ENCODE measurements at regions of chr19 and their contacts with region 1.

Region 1: DNA sequence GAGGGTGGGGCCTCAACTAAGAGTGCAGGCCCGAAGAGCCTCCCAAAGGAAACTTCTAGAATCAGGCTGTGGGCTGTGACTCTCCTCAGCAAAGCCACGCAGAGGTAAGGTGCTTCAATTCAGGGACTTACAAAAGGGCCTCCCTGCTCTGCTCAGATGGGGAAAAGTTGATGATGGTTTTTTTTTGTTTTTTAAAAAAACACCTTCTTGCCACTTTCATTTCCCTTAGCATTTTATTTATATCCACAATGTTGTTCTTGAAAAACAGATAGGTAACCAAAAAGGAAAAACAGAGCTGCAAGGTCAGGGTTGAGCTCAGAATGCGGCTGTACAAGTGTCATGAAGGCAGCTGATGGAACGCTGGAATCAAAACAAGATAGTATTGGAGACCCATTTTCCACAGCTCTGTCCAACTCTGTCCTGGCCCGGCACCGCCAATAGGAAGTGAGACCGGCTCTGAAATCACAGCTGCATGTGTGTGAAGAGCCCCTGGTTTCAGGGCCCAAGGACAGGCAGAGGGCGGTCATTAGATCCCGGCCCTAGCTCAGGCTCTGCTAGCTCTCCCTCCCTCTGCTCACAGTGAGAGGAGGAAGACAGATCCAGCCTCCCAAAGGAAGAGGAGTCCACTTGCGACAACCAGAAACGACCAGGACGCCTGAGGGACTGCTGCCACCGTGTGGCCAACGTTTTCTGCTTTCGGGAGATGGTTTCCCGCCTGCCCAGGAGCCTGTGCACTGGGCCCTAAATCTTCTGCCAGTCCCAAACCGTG is 58.3 kb downstream of the KLF2 start:
- DNase-seq: peak; percentile 72 to 80 (median 77)
- H3K4me3 ChIP-seq: peak overlapping the region in 1 of 2 donors; percentile 50
- H3K4me3 Mint-ChIP-seq: peak overlapping the region; percentile 63 to 85 (median 77)
- H3K27ac ChIP-seq: peak overlapping the region; percentile 66
- H3K27ac Mint-ChIP-seq: peak overlapping the region; percentile 93 to 97 (median 96)
- H3K4me1 ChIP-seq: peaks cover 69% of the 10 kb centered on the region
- H3K4me1 Mint-ChIP-seq: peaks cover 35 to 76% (median 60%) of the 10 kb centered on the region in 4 donors
- H3K27me3 ChIP-seq: no peaks in the 10 kb centered on the region
- H3K27me3 Mint-ChIP-seq: no peaks in the 10 kb centered on the region

Region 2: DNA sequence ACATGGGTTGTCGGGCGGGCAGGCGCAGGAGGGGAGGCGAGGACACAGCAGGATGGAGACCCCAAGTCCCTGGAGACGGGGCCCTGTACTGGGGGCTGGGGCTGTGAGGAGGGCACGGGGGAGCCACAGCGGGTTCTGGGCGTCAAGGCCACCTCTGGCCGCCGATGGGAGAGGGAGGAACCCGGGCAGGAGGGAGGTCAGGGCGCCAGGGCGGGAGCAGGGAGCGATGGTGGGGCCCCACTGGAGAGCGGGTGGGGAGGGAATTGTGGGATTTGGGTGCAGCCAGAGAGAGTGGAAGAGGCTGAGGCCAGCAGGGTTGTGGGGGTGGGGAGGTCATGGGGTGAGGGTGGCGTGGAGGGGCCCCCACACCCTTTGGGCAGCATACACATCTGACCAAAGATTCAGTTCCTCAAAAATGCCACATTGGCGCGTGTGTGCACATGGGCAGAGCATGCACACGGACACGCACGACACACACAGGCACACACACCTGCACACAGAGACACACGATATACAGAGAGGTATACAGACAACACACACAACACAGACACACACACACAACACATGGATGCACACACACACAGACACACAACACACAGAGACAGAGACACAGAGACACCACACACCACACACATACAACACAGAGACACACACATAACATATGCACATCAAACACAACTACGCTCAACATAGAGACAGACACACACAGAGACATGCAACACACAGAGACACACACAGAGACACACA is 130.3 kb before region 1 on chr19:
- CTCF ChIA-PET with region 1: interaction called, 257 read pairs
- POLR2A ChIA-PET with region 1: interaction called, 62 read pairs
- intact Hi-C with region 1: loop called (anchors 1 kb)
- DNase-seq: no peak
- H3K4me3 ChIP-seq: no peak overlapping the region
- H3K4me3 Mint-ChIP-seq: no peak overlapping the region
- H3K27ac ChIP-seq: no peak overlapping the region
- H3K27ac Mint-ChIP-seq: no peak overlapping the region
- H3K4me1 ChIP-seq: peaks cover 16% of the 10 kb centered on the region
- H3K4me1 Mint-ChIP-seq: peaks cover 7 to 30% (median 19%) of the 10 kb centered on the region in 4 donors
- H3K27me3 ChIP-seq: no peaks in the 10 kb centered on the region
- H3K27me3 Mint-ChIP-seq: no peaks in the 10 kb centered on the region

Region 3: GRCh38 chr19:16315825-16316505 is 67.0 kb before region 1 on chr19:
- CTCF ChIA-PET with region 1: interaction called, 12 read pairs
- POLR2A ChIA-PET with region 1: interaction called, 6,478 read pairs
- intact Hi-C with region 1: no loop called
- DNase-seq: no peak
- H3K4me3 ChIP-seq: no peak overlapping the region
- H3K4me3 Mint-ChIP-seq: no peak overlapping the region
- H3K27ac ChIP-seq: no peak overlapping the region
- H3K27ac Mint-ChIP-seq: peak overlapping the region in 3 of 7 donors; percentile 9 to 55 (median 34)
- H3K4me1 ChIP-seq: peaks cover 13% of the 10 kb centered on the region
- H3K4me1 Mint-ChIP-seq: peaks cover 5 to 15% (median 10%) of the 10 kb centered on the region in 4 donors
- H3K27me3 ChIP-seq: no peaks in the 10 kb centered on the region
- H3K27me3 Mint-ChIP-seq: no peaks in the 10 kb centered on the region

Region 4: DNA sequence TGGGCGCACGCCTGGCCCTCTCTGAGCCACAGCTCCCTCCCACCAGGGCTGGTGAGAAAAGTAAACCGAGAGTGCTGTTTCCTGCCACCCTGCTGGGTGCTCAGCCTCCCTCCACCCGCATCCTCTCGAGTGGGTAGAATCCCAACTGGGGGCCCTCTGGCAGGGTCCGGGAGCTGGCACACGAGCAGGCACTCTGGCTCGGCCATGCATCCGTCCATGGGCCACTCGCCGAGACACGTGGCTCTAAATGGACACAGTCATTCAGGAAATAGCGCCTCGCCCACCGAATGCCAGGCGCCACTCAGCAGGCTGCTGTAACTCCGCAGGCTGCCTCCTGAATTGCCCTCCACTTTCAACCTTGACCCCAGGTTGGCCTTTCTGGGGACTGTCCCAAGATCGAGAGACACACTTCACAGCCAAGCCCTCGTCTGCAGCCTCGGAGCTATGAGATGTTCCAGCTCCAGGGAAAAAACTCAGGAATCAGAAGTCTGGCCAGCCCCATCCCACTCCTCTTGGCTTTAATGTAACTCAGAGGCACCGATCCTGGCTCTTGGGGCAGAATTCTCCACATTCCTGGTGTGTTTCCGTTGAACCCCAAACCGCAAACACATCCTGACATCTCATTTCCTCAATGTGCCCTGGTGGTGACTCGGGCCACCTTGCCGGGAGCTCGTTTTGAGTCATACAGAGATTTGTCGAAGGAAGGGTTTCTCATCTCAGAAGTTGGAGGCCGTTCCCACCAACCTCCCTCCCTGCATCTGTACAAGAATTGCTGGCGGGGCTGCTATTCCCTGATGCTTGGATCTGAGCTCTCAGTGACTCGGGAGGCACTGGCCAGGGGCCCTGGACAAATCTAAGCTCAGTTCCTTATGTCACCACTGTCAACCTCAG is 44.2 kb before region 1 on chr19:
- CTCF ChIA-PET with region 1: interaction called, 31 read pairs
- POLR2A ChIA-PET with region 1: interaction called, 6,478 read pairs
- intact Hi-C with region 1: loop called (anchors 2 kb)
- DNase-seq: peak; percentile 29 to 73 (median 46)
- H3K4me3 ChIP-seq: peak overlapping the region; percentile 48
- H3K4me3 Mint-ChIP-seq: peak overlapping the region; percentile 83 to 97 (median 90)
- H3K27ac ChIP-seq: peak overlapping the region; percentile 66
- H3K27ac Mint-ChIP-seq: peak overlapping the region; percentile 78 to 99 (median 96)
- H3K4me1 ChIP-seq: peaks cover 70% of the 10 kb centered on the region
- H3K4me1 Mint-ChIP-seq: peaks cover 41 to 77% (median 56%) of the 10 kb centered on the region in 4 donors
- H3K27me3 ChIP-seq: no peaks in the 10 kb centered on the region
- H3K27me3 Mint-ChIP-seq: no peaks in the 10 kb centered on the region

Region 5: DNA sequence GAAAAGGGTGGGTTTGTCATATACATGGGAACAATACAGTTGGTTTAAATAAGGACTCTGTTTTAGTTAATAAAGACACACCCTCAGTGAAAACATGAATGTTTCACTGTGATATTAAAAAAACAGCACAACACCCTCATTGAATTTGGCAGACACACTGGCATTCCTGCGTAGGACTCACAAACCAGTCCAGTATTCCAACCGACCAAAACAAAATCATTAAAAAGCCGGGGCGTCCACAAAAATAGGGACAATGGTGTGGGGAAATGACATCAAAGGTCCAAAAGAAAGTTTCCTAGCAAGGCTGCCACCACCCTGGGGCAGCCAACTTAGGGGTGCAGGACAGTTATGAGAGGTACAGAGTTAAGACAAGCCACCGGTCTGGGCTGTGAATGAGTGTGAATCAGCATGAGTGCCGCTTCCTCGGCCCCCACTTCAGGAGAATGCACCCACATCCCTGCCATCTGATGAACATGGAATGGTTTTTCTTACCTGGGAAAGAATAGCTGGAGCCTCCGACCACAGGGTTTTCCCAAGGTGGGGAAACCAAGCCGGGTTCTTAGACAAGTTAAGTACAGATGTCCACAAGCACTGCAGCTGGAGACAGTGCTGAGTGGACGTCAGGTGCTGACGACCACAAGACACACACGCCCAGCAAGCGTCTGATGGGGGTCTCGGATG is 15.0 kb after region 1 on chr19:
- CTCF ChIA-PET with region 1: interaction called, 10 read pairs
- POLR2A ChIA-PET with region 1: interaction called, 3 read pairs
- intact Hi-C with region 1: no loop called
- DNase-seq: no peak
- H3K4me3 ChIP-seq: no peak overlapping the region
- H3K4me3 Mint-ChIP-seq: no peak overlapping the region
- H3K27ac ChIP-seq: no peak overlapping the region
- H3K27ac Mint-ChIP-seq: peak overlapping the region in 6 of 7 donors; percentile 16 to 93 (median 84)
- H3K4me1 ChIP-seq: peaks cover 18% of the 10 kb centered on the region
- H3K4me1 Mint-ChIP-seq: peaks cover 6 to 31% (median 12%) of the 10 kb centered on the region in 4 donors
- H3K27me3 ChIP-seq: no peaks in the 10 kb centered on the region
- H3K27me3 Mint-ChIP-seq: no peaks in the 10 kb centered on the region

Measured in CD4-positive, alpha-beta memory T cell (primary cell).